Activated CD8-positive, alpha-beta T cell treated with anti-CD3 and anti-CD28 coated beads for 36 hours (primary cell): ENCODE measurements at regions of chr5 and their contacts with region 1.

Region 1: DNA sequence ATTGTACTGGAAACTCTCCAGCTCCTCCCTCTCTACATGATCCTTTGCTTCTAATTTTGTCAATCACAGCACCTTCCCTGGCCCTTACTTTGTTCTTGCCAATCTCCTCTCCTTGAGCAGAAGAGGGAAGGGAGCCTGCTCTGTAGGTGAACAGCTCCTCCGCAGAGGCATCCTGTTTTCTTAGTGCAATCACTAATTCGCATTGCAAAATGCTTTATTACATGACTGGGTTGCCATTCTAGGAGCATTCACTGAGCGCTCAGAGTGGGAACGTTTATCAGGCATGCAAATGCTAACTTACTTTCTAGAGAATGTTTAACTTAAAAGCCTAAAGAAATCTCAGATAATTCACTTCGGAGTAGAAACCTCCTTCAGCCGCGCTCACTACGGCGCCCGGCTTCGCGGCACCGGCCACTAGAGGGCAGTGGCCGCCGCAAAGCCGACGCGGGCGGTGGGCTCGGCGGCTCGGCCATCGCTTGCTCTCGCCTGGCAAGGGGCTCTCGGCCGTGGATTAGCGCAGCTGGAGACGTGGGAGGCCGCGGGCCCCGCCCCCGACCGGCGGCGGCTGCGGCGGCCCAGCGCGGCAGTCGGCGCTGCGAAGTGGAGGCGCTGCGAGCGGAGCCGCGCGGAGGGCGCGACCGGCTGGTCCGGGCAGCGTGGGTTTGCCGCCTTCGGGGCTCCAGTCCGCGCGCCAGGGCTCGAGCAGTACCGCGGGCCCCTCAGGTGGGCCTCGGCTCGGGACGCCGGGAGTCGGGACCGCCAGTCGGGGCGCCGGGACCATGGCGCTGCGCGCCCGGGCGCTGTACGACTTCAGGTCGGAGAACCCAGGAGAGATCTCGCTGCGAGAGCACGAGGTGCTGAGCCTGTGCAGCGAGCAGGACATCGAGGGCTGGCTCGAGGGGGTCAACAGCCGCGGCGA is at the start of gene SNX18:
- DNase-seq: peak; percentile 90
- ATAC-seq: peak; percentile 83
- H3K4me3 Mint-ChIP-seq: peak within 1 kb of the TSS; percentile 75
- H3K27ac Mint-ChIP-seq: no peak within 1 kb of the TSS
- H3K4me1 Mint-ChIP-seq: peaks cover 38% of the 10 kb centered on the region
- H3K27me3 Mint-ChIP-seq: peaks cover 3% of the 10 kb centered on the region
- CTCF ChIP-seq: peak; percentile 91
- total RNA-seq, gene SNX18: 5.9 to 6.8 TPM

Region 2: GRCh38 chr5:54646356-54647101 is 129.1 kb after region 1 on chr5:
- CTCF ChIA-PET with region 1: interaction called, 10 read pairs
- POLR2A ChIA-PET with region 1: no interaction called
- intact Hi-C with region 1: loop called (anchors 5 kb)
- DNase-seq: peak; percentile 91
- ATAC-seq: peak; percentile 94
- H3K4me3 Mint-ChIP-seq: peak overlapping the region; percentile 62
- H3K27ac Mint-ChIP-seq: peak overlapping the region; percentile 95
- H3K4me1 Mint-ChIP-seq: peaks cover 54% of the 10 kb centered on the region
- H3K27me3 Mint-ChIP-seq: no peaks in the 10 kb centered on the region
- CTCF ChIP-seq: no peak

Region 3: GRCh38 chr5:54832858-54833257 is 315.4 kb after region 1 on chr5:
- CTCF ChIA-PET with region 1: interaction called, 14 read pairs
- POLR2A ChIA-PET with region 1: no interaction called
- intact Hi-C with region 1: no loop called
- DNase-seq: no peak
- ATAC-seq: peak; percentile 47
- H3K4me3 Mint-ChIP-seq: no peak overlapping the region
- H3K27ac Mint-ChIP-seq: no peak overlapping the region
- H3K4me1 Mint-ChIP-seq: peaks cover 4% of the 10 kb centered on the region
- H3K27me3 Mint-ChIP-seq: peaks cover under 1% of the 10 kb centered on the region
- CTCF ChIP-seq: no peak

Region 4: DNA sequence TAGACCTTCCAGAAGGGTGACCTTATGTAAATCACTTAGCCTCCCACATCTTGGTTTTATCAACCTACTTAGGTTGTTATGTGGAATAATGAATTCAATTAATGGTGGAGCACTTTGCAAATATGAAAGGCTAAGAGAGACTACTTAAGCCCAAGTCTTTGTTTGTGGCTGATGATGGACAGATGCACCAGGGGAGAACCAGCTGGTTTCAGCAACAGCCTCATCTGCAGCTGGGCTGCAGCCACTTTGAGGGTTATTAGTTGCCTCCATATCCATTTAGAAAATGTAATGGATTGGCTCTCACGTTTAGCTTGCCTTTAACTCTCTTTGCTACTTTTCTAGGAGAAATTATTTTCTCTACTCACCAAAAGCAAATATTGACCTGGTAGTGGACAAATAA is 321.4 kb after region 1 on chr5:
- CTCF ChIA-PET with region 1: interaction called, 121 read pairs
- POLR2A ChIA-PET with region 1: no interaction called
- intact Hi-C with region 1: loop called (anchors 2 kb)
- DNase-seq: no peak
- ATAC-seq: no peak
- H3K4me3 Mint-ChIP-seq: no peak overlapping the region
- H3K27ac Mint-ChIP-seq: no peak overlapping the region
- H3K4me1 Mint-ChIP-seq: peaks cover 13% of the 10 kb centered on the region
- H3K27me3 Mint-ChIP-seq: peaks cover 2% of the 10 kb centered on the region
- CTCF ChIP-seq: no peak

Region 5: DNA sequence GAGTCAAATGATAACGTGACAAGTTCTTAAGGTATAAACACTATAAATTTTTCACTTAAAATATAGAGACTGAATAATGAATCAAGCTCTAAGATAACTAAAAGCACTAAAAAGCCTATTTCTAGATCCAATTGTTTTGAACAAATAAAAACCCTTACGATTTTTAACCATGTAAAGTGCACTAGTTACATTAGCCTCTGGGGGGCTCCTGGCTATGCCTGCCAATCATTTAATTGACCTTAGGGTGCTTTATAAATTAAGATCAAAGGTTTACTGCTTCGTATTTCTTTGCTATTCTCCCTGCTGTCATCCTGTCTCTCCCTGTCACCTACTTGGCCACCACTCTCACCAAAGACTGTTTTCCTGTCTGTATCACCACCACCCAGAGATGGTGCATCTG is 334.6 kb after region 1 on chr5:
- CTCF ChIA-PET with region 1: interaction called, 37 read pairs
- POLR2A ChIA-PET with region 1: no interaction called
- intact Hi-C with region 1: no loop called
- DNase-seq: no peak
- ATAC-seq: no peak
- H3K4me3 Mint-ChIP-seq: no peak overlapping the region
- H3K27ac Mint-ChIP-seq: no peak overlapping the region
- H3K4me1 Mint-ChIP-seq: no peaks in the 10 kb centered on the region
- H3K27me3 Mint-ChIP-seq: peaks cover 27% of the 10 kb centered on the region
- CTCF ChIP-seq: no peak